B cell (primary cell): ENCODE measurements at regions of chr4 and their contacts with region 1.

Region 1: DNA sequence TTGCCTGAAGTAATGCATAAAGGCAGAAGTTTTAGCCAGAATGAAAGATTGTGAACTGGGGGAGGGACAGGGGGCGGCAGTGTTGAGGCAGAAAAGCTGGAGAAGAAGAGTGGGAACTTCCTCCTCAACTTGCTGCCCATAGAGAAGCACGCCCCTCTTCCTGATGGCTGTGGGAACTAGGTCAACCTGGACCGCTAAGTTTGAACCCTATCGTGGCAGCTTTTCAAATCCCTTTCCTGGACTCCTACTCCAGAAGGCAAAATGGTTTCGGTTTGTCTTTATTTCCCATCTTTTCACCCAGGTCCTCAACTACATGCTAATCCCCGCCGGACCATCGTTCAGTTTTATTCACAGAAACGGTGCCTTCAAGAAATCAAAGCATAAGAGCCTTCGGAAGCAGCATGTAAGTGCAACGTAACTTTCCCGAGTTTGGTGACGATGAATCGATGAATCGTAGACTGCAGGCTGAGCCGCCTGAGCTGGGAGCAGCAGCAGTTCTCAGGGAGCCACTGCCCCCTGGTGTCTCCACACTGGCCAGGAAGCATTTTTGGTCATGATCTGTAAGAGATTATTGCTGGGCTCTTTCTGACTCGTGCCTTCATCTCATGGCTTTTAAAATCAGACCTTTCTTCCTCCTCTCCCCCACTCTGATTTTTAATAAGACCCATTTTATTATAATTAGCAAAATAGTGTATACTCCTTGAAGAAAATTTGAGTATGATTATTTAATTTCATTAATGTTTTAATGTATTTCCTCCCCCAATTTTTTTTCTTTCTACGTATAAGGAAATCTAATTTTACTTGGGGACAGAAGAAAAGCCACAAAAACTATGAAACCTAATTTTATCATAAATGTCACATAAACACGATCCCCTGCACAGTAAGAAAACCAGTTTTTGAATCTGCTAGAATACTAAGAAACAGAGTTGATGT is 21.4 kb downstream of the SPINK2 start:
- DNase-seq: peak; percentile 88
- ATAC-seq: peak; percentile 97
- H3K4me3 ChIP-seq: peak overlapping the region; percentile 53 to 98 (median 91)
- H3K4me3 Mint-ChIP-seq: peak overlapping the region; percentile 96
- H3K27ac ChIP-seq: peak overlapping the region; percentile 47 to 78
- H3K27ac Mint-ChIP-seq: peak overlapping the region; percentile 89
- H3K4me1 ChIP-seq: peaks cover 16 to 23% of the 10 kb centered on the region in 2 donors
- H3K4me1 Mint-ChIP-seq: peaks cover 29% of the 10 kb centered on the region
- H3K27me3 ChIP-seq: no peaks in the 10 kb centered on the region
- H3K27me3 Mint-ChIP-seq: no peaks in the 10 kb centered on the region
- CTCF ChIP-seq: peak; percentile 87

Region 2: DNA sequence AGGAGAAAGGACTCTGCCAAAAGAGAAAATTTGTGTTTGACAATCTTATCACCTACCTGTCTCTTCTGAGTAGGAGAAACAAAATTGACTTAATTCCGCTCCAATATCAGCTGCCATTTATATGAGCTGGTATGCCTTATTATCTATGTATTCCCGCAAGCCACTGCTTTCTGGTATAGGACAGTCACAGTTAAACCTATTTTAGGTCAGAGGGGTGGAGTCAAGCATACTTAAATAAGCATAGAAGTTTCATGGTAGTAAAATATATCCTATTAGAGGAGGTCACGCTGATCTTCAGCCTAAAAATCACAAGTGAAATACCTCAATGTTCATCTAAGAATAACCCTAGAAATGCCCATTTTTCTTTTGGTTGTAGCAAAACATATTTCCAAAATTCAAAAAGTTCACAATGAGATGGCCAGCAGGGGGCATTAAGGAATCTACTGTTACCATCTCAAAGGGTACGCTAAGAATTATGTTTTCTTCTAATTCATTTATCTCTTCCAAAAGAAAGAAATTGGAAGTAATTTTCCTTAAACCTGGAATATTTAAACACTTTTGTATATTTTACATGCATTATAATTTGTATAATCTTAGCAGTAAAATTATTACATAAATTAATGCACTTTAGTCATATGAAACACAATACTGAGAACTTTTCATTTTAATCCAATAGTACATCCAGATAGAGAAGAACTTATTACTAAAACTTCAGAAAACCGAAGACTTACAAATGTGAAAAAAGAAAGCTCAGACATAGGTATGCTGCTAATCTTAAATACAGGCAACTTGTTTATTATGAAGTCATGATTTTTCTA is 375.2 kb before region 1 on chr4:
- CTCF ChIA-PET with region 1: interaction called, 18 read pairs
- POLR2A ChIA-PET with region 1: no interaction called
- intact Hi-C with region 1: loop called (anchors 1 kb)
- DNase-seq: peak; percentile 67
- ATAC-seq: no peak
- H3K4me3 ChIP-seq: no peak overlapping the region
- H3K4me3 Mint-ChIP-seq: no peak overlapping the region
- H3K27ac ChIP-seq: no peak overlapping the region
- H3K27ac Mint-ChIP-seq: no peak overlapping the region
- H3K4me1 ChIP-seq: no peaks in the 10 kb centered on the region
- H3K4me1 Mint-ChIP-seq: peaks cover 9% of the 10 kb centered on the region
- H3K27me3 ChIP-seq: no peaks in the 10 kb centered on the region
- H3K27me3 Mint-ChIP-seq: no peaks in the 10 kb centered on the region
- CTCF ChIP-seq: peak; percentile 85

Region 3: GRCh38 chr4:56467284-56468096 is 332.6 kb before region 1 on chr4 and contains the start of gene SRP72:
- CTCF ChIA-PET with region 1: interaction called, 3 read pairs
- POLR2A ChIA-PET with region 1: no interaction called
- intact Hi-C with region 1: loop called (anchors 5 kb)
- DNase-seq: peak; percentile 91
- ATAC-seq: peak; percentile 96
- H3K4me3 ChIP-seq: peak within 1 kb of the TSS; percentile 83 to 97 (median 89)
- H3K4me3 Mint-ChIP-seq: peak within 1 kb of the TSS; percentile 99
- H3K27ac ChIP-seq: peak within 1 kb of the TSS; percentile 73 to 81
- H3K27ac Mint-ChIP-seq: peak within 1 kb of the TSS; percentile 96
- H3K4me1 ChIP-seq: peaks cover 38 to 42% of the 10 kb centered on the region in 2 donors
- H3K4me1 Mint-ChIP-seq: peaks cover 56% of the 10 kb centered on the region
- H3K27me3 ChIP-seq: no peaks in the 10 kb centered on the region
- H3K27me3 Mint-ChIP-seq: no peaks in the 10 kb centered on the region
- CTCF ChIP-seq: no peak
- total RNA-seq, gene SRP72: 111 and 114 TPM in 2 replicates

Region 4: DNA sequence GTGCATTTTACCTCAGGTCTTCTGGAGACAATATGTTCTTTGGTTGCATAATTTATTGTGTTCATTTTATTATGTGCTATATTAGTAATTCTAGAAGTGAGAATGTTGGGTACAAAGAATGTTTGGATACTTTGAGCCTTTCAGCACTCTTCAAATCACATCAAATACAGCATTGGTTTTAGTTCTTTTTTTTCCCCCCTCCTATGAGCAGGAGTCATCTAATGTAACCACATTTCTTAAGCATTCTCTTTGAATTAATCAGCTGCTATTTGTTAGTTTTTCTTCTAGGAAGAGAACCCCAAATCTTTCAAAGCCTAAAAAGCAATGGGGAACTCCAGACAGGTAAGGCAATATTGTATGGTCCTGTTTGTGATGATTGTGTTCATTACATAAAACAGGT is 247.8 kb before region 1 on chr4:
- CTCF ChIA-PET with region 1: no interaction called
- POLR2A ChIA-PET with region 1: no interaction called
- intact Hi-C with region 1: no loop called
- DNase-seq: no peak
- ATAC-seq: no peak
- H3K4me3 ChIP-seq: no peak overlapping the region
- H3K4me3 Mint-ChIP-seq: no peak overlapping the region
- H3K27ac ChIP-seq: no peak overlapping the region
- H3K27ac Mint-ChIP-seq: no peak overlapping the region
- H3K4me1 ChIP-seq: no peaks in the 10 kb centered on the region
- H3K4me1 Mint-ChIP-seq: no peaks in the 10 kb centered on the region
- H3K27me3 ChIP-seq: no peaks in the 10 kb centered on the region
- H3K27me3 Mint-ChIP-seq: peaks cover 8% of the 10 kb centered on the region
- CTCF ChIP-seq: no peak

Region 5: DNA sequence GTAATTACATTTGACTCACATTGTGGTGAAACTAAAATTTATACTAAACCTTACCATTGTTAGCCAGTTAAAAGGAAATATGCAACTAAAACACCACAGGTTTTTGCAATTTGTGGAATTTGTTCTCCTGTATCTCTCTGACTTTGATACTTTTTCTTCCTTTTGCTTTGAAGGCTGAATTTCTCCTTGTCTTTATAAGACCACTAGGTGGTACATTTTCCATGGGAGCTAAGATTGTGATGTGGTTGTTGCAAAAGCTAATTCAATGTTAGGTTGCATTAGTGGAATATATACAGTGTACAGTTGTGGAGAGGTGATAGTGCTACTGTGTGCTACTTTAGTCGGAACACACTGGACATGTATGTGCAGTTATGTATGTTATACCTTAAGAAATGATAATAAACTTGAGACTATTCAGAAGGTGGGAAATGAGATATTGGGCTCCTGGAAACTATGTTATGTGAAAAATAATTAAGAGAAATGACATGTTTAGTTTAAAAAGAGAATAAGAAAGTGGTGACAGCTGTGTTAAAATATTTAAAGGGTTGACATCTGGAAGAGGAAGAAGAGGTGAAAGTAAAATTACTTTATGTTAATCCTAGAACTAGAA is 224.2 kb before region 1 on chr4:
- CTCF ChIA-PET with region 1: interaction called, 52 read pairs
- POLR2A ChIA-PET with region 1: no interaction called
- intact Hi-C with region 1: loop called (anchors 1 kb)
- DNase-seq: peak; percentile 30
- ATAC-seq: no peak
- H3K4me3 ChIP-seq: no peak overlapping the region
- H3K4me3 Mint-ChIP-seq: no peak overlapping the region
- H3K27ac ChIP-seq: no peak overlapping the region
- H3K27ac Mint-ChIP-seq: no peak overlapping the region
- H3K4me1 ChIP-seq: no peaks in the 10 kb centered on the region
- H3K4me1 Mint-ChIP-seq: no peaks in the 10 kb centered on the region
- H3K27me3 ChIP-seq: no peaks in the 10 kb centered on the region
- H3K27me3 Mint-ChIP-seq: peaks cover 4% of the 10 kb centered on the region
- CTCF ChIP-seq: peak; percentile 28

Region 6: GRCh38 chr4:56757821-56758411 is 42.2 kb before region 1 on chr4:
- CTCF ChIA-PET with region 1: interaction called, 3 read pairs
- POLR2A ChIA-PET with region 1: no interaction called
- intact Hi-C with region 1: loop called (anchors 1 kb)
- DNase-seq: peak; percentile 78
- ATAC-seq: peak; percentile 87
- H3K4me3 ChIP-seq: peak overlapping the region; percentile 22 to 60 (median 34)
- H3K4me3 Mint-ChIP-seq: peak overlapping the region; percentile 84
- H3K27ac ChIP-seq: peak overlapping the region; percentile 68 to 77
- H3K27ac Mint-ChIP-seq: peak overlapping the region; percentile 95
- H3K4me1 ChIP-seq: peaks cover 39 to 53% of the 10 kb centered on the region in 2 donors
- H3K4me1 Mint-ChIP-seq: peaks cover 60% of the 10 kb centered on the region
- H3K27me3 ChIP-seq: no peaks in the 10 kb centered on the region
- H3K27me3 Mint-ChIP-seq: no peaks in the 10 kb centered on the region
- CTCF ChIP-seq: no peak

Region 7: DNA sequence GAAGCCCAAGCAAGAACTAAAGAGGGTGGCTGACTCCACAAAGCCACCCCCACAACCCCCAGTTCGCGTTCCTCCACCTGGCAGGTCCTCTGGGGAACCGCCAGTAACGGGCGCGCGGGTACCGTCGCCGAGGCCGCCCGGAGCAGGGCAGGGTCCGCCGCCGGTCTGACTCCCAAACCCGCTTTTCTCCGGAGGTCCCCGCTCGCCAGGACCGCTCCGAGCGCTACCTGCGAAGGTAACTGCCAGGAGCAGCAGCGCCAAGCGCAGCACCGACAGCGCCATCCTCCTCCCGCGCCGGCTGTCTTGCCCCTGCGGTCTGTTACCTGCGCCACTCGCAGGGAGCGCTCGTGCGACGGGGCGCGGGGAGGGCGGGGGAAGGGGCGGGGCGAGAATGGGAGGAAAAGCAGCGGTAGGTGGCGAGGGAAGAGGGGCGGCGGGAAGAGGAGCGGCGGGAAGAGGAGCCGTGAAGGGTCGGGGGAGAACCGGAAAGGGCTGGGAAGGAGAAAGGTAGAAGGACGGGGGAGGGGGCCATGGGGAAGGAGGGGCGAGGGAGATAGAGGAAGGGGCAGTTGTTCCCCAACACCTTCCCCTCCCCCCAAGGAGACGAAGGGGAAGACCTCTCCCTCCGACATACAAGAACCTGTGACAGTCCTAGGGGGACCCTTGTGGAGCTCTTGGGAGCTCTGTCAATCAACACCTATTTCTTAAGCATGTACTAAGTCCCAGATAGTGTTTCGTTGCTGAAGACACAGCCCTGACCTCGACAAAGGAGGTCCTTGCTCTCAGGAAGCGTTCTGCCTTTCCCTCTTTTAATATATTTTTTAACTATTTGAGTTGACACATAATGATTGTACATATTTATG is 21.5 kb after region 1 on chr4 and contains the start of gene SPINK2:
- CTCF ChIA-PET with region 1: interaction called, 4 read pairs
- POLR2A ChIA-PET with region 1: no interaction called
- intact Hi-C with region 1: loop called (anchors 2 kb)
- DNase-seq: peak; percentile 82
- ATAC-seq: peak; percentile 90
- H3K4me3 ChIP-seq: peak within 1 kb of the TSS; percentile 36 to 66 (median 62)
- H3K4me3 Mint-ChIP-seq: peak within 1 kb of the TSS; percentile 83
- H3K27ac ChIP-seq: no peak within 1 kb of the TSS
- H3K27ac Mint-ChIP-seq: peak within 1 kb of the TSS; percentile 8
- H3K4me1 ChIP-seq: peaks cover 26 to 32% of the 10 kb centered on the region in 2 donors
- H3K4me1 Mint-ChIP-seq: peaks cover 35% of the 10 kb centered on the region
- H3K27me3 ChIP-seq: peaks cover 0 to 18% (median 4%) of the 10 kb centered on the region in 4 experiments
- H3K27me3 Mint-ChIP-seq: peaks cover 4% of the 10 kb centered on the region
- CTCF ChIP-seq: peak; percentile 37
- total RNA-seq, gene SPINK2: 0.63 and 0.94 TPM in 2 replicates

Region 8: GRCh38 chr4:56907489-56908205 is 107.6 kb after region 1 on chr4 and contains the start of gene REST:
- CTCF ChIA-PET with region 1: interaction called, 3 read pairs
- POLR2A ChIA-PET with region 1: no interaction called
- intact Hi-C with region 1: loop called (anchors 5 kb)
- DNase-seq: peak; percentile 92
- ATAC-seq: peak; percentile 65
- H3K4me3 ChIP-seq: peak within 1 kb of the TSS; percentile 62 to 98 (median 88)
- H3K4me3 Mint-ChIP-seq: peak within 1 kb of the TSS; percentile 93
- H3K27ac ChIP-seq: peak within 1 kb of the TSS; percentile 47 to 77
- H3K27ac Mint-ChIP-seq: peak within 1 kb of the TSS; percentile 92
- H3K4me1 ChIP-seq: peaks cover 29 to 35% of the 10 kb centered on the region in 2 donors
- H3K4me1 Mint-ChIP-seq: peaks cover 42% of the 10 kb centered on the region
- H3K27me3 ChIP-seq: no peaks in the 10 kb centered on the region
- H3K27me3 Mint-ChIP-seq: peaks cover 3% of the 10 kb centered on the region
- CTCF ChIP-seq: no peak
- total RNA-seq, gene REST: 59.4 and 61.1 TPM in 2 replicates

Region 9: GRCh38 chr4:57102050-57102624 is 302.0 kb after region 1 on chr4:
- CTCF ChIA-PET with region 1: no interaction called
- POLR2A ChIA-PET with region 1: no interaction called
- intact Hi-C with region 1: no loop called
- DNase-seq: no peak
- ATAC-seq: no peak
- H3K4me3 ChIP-seq: no peak overlapping the region
- H3K4me3 Mint-ChIP-seq: no peak overlapping the region
- H3K27ac ChIP-seq: no peak overlapping the region
- H3K27ac Mint-ChIP-seq: no peak overlapping the region
- H3K4me1 ChIP-seq: no peaks in the 10 kb centered on the region
- H3K4me1 Mint-ChIP-seq: no peaks in the 10 kb centered on the region
- H3K27me3 ChIP-seq: peaks cover 0 to 5% (median under 1%) of the 10 kb centered on the region in 4 experiments
- H3K27me3 Mint-ChIP-seq: peaks cover 29% of the 10 kb centered on the region
- CTCF ChIP-seq: no peak